Heart left ventricle (tissue), 16 donors: ENCODE measurements at regions of chr9 and their contacts with region 1.

Region 1: DNA sequence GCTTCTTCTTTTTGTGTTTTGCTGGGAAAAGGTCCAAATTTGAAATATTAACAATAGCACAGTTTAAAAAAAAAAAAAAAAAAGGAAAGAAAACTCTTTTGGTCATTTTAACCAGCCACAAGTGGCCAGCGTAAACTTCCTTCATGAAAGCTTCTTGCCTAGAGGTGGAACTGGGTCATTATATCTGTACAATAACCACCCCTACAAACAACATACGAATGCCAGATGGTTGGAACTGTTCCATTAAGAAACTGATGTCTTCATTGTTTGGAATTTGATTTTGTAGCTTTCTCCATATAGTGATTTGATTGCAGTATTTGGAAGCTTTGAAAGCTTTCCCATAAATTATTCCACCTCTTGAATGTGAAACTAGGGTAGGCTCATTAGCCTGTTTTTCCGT is 18.3 kb upstream of the LPAR1 start:
- DNase-seq: no peak
- ATAC-seq: no peak
- H3K4me3 ChIP-seq: peak overlapping the region in 1 of 12 donors; percentile 13
- H3K27ac ChIP-seq: no peak overlapping the region
- H3K4me1 ChIP-seq: peaks cover 0 to 5% (median 0%) of the 10 kb centered on the region in 12 donors
- H3K27me3 ChIP-seq: no peaks in the 10 kb centered on the region
- CTCF ChIP-seq: no peak
- POLR2A ChIP-seq: no peak

Region 2: GRCh38 chr9:110808599-110808980 is 247.9 kb before region 1 on chr9:
- intact Hi-C with region 1: no loop called
- DNase-seq: no peak
- ATAC-seq: no peak
- H3K4me3 ChIP-seq: no peak overlapping the region
- H3K27ac ChIP-seq: no peak overlapping the region
- H3K4me1 ChIP-seq: no peaks in the 10 kb centered on the region
- H3K27me3 ChIP-seq: peaks cover 0 to 4% (median 0%) of the 10 kb centered on the region in 9 donors
- CTCF ChIP-seq: no peak
- POLR2A ChIP-seq: no peak

Region 3: DNA sequence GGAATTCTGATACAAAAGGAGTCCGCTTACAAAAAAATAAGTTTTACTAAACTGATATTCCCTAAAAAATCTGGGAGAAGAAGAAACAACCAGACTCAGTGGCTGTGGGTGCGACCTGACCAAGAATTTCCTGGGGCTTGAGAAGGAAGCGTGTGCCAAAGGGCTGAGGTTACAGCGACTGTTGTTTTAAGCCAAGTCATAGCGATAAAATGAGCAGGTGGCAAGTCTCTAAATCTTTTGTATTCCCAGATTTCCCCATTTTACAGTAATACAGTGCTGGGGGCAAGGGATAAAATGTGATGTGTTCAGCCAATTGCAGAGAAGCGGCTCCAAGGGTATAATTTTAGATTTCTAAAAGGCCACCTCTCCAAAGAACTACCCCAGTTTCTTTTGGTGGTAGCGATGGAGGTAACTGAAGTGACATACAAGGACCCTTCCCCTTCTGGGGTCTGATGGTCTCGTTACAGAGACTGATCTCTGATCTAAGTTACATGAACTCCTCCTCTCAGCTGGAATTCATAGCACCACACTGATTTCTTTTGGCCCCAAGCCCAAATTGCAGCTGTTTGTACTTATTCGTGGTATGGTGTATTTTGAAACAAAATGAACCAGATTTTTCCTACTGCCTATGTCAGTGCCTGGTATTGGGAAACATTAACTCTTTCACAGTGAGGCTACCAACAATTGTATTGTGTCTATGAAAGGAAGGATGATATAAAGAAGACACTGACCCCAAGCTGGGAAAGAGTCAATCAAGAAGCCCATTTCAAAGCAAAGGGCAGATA is 59.9 kb before region 1 on chr9:
- intact Hi-C with region 1: loop called in 1 of 10 experiments (anchors 10 kb)
- DNase-seq: peak in 4 of 5 donors; percentile 37 to 52 (median 46)
- ATAC-seq: peak; percentile 34 to 78 (median 62)
- H3K4me3 ChIP-seq: no peak overlapping the region
- H3K27ac ChIP-seq: peak overlapping the region in 10 of 12 donors; percentile 22 to 56 (median 46)
- H3K4me1 ChIP-seq: peaks cover 0 to 56% (median 0%) of the 10 kb centered on the region in 12 donors
- H3K27me3 ChIP-seq: no peaks in the 10 kb centered on the region
- CTCF ChIP-seq: no peak
- POLR2A ChIP-seq: no peak